Right ventricle myocardium inferior (tissue), 1 donor: ENCODE measurements at regions of chr1 and their contacts with region 1.

Region 1: DNA sequence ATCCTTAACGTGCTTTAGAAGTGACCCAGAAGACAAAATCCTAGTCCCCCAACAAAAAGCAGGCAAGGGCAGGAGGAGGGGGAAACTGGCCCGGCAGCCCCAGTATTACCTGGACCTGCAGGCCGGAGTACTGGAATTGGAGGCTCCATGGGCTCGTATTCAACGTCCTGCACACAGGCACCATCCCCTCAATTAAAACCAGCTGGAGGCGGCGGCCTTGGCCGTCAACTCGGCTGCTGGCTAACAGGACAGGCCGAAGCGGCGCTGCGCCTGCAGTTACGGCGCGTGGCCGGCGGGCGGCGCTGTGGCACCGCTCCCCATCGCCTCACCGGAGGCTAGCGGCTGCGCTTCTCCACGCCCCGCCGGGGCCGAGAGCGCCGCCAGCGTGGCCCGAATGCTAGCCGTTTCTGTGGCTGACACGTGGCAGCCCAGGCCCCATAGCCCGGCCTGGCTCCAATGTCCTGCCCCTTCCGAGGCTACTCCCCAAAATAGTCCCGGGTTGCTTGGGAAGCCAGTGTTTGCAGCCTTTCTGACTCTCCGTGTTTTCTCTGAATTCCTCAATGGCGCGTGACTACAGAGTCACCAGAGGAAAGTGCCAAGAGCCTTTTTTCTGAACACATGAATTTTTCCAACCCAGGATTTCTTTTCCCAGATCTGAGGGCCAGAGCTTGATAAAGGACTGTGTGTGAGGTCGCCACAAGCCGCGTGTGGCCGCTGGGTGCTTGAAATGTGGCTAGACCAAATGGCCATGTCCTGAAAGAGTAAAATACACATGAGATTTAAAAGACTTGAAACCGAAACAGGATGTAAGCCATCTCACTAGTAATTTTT is 82.5 kb downstream of the HHIPL2 start:
- DNase-seq: peak; percentile 94
- ATAC-seq: peak; percentile 100

Region 2: GRCh38 chr1:222634180-222635013 is 169.0 kb after region 1 on chr1:
- intact Hi-C with region 1: loop called (anchors 1 kb)
- DNase-seq: no peak
- ATAC-seq: peak; percentile 60

Region 3: GRCh38 chr1:222713091-222713961 is 247.9 kb after region 1 on chr1:
- intact Hi-C with region 1: loop called (anchors 2 kb)
- DNase-seq: peak; percentile 96
- ATAC-seq: peak; percentile 90

Region 4: DNA sequence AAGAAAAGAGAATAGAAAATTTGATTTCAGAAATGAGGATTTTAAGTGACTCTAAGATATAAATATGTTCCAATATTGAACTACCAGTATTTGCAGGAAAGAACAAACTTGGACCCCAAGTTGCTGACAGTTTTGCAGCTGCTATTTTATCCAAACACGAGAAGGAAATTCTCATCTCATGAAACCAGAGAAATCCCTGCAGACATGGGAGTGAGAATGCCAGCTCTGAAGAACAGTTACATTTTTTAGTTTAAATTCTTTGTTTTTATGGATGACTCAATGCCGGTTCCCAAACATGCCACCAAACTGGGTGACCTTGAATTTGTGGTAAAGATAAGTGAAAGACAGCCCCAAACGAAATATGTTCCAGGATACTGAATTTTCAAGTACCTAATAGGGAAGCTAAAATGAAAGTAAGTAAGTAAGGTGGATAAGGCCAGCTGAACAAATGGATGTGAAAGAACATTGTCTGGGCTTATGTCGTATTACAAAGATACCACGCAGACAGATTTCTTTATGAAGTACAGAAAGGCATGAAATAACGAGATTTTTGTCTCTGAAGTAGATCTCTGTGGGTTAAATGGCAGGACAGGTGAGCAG is 657.7 kb after region 1 on chr1:
- intact Hi-C with region 1: loop called (anchors 5 kb)
- DNase-seq: no peak
- ATAC-seq: no peak